SK-N-SH (cell line): ENCODE measurements at regions of chr3 and their contacts with region 1.

Region 1: GRCh38 chr3:152071924-152072323 is 196.8 kb upstream of the MBNL1 start:
- DNase-seq: peak; percentile 20
- H3K4me3 ChIP-seq: no peak overlapping the region
- H3K27ac ChIP-seq: no peak overlapping the region
- H3K4me1 ChIP-seq: peaks cover 0 to 3% of the 10 kb centered on the region in 2 experiments; a peak in 1 of 4 replicates
- H3K27me3 ChIP-seq: no peaks in the 10 kb centered on the region
- CTCF ChIP-seq: peak; percentile 45; the same call in 1 of the 2 replicates
- EP300 ChIP-seq: no peak
- RAD21 ChIP-seq: peak; percentile 66

Region 2: GRCh38 chr3:152060701-152061100 is 11.2 kb before region 1 on chr3:
- CTCF ChIA-PET with region 1: interaction called, 10 read pairs
- POLR2A ChIA-PET with region 1: no interaction called
- DNase-seq: no peak
- H3K4me3 ChIP-seq: no peak overlapping the region
- H3K27ac ChIP-seq: no peak overlapping the region
- H3K4me1 ChIP-seq: peaks cover 0 to 3% of the 10 kb centered on the region in 2 experiments; a peak in 1 of 4 replicates
- H3K27me3 ChIP-seq: no peaks in the 10 kb centered on the region
- CTCF ChIP-seq: no peak
- EP300 ChIP-seq: no peak
- RAD21 ChIP-seq: no peak

Region 3: DNA sequence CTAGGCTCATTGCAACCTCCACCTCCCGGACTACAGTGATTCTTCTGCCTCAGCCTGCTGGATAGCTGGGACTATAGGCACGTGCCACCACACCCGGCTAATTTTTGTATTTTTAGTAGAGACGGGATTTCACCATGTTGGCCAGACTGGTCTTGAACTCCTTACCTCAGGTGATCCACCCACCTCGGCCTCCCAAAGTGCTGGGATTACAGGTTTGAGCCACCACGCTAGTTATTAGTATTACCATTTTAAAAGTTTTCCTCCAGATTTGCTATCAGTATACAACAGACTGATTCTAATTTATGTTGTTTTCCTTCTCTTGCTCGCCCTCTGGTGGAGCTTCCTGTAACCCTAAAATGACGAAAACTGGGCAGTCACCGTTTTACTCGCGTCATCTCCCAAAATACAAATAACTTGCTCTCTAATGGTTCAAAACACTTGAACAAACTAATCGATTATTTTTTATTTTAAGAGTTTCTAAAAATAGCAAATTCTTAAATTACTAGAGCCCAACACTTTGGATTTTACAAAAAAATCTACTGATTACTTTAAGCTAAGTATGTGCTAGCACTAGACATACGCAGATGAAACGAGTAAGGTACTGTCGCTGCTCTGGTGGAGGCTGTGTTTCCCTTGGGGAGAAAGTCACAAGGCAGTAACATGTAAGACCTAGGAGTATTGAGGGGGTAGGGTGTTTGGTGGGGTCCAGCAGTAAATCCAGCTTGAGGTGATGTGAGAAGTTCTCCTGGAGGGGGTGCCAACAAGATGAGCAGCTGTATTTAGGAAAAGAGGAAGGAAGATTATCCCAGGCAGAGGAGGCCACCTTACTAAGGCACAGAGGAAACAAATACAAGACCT is 400.1 kb after region 1 on chr3:
- CTCF ChIA-PET with region 1: interaction called, 21 read pairs
- POLR2A ChIA-PET with region 1: no interaction called
- DNase-seq: peak; percentile 49
- H3K4me3 ChIP-seq: peak overlapping the region in 1 of 2 experiments; percentile 14; a peak in 2 of 4 replicates
- H3K27ac ChIP-seq: no peak overlapping the region; a peak in 1 of 4 replicates
- H3K4me1 ChIP-seq: peaks cover 0 to 3% of the 10 kb centered on the region in 2 experiments; a peak in 1 of 4 replicates
- H3K27me3 ChIP-seq: no peaks in the 10 kb centered on the region
- CTCF ChIP-seq: peak; percentile 80
- EP300 ChIP-seq: no peak
- RAD21 ChIP-seq: peak; percentile 71